ENCODE measurements at regions of chr21 and their contacts with region 1.

Region 1: GRCh38 chr21:33947451-33948095 is 32.0 kb upstream of the ATP5PO start:
- DNase-seq: peak; percentile 91
- H3K4me3 Mint-ChIP-seq: peak overlapping the region; percentile 62
- H3K27ac Mint-ChIP-seq: peak overlapping the region; percentile 99
- H3K4me1 Mint-ChIP-seq: peaks cover 78% of the 10 kb centered on the region
- H3K27me3 Mint-ChIP-seq: no peaks in the 10 kb centered on the region

Region 2: GRCh38 chr21:33931799-33932390 is 15.7 kb before region 1 on chr21:
- CTCF ChIA-PET with region 1: interaction called, 78 read pairs
- POLR2A ChIA-PET with region 1: interaction called, 28 read pairs
- DNase-seq: peak; percentile 38
- H3K4me3 Mint-ChIP-seq: peak overlapping the region; percentile 99
- H3K27ac Mint-ChIP-seq: peak overlapping the region; percentile 100
- H3K4me1 Mint-ChIP-seq: peaks cover 49% of the 10 kb centered on the region
- H3K27me3 Mint-ChIP-seq: no peaks in the 10 kb centered on the region

Region 3: DNA sequence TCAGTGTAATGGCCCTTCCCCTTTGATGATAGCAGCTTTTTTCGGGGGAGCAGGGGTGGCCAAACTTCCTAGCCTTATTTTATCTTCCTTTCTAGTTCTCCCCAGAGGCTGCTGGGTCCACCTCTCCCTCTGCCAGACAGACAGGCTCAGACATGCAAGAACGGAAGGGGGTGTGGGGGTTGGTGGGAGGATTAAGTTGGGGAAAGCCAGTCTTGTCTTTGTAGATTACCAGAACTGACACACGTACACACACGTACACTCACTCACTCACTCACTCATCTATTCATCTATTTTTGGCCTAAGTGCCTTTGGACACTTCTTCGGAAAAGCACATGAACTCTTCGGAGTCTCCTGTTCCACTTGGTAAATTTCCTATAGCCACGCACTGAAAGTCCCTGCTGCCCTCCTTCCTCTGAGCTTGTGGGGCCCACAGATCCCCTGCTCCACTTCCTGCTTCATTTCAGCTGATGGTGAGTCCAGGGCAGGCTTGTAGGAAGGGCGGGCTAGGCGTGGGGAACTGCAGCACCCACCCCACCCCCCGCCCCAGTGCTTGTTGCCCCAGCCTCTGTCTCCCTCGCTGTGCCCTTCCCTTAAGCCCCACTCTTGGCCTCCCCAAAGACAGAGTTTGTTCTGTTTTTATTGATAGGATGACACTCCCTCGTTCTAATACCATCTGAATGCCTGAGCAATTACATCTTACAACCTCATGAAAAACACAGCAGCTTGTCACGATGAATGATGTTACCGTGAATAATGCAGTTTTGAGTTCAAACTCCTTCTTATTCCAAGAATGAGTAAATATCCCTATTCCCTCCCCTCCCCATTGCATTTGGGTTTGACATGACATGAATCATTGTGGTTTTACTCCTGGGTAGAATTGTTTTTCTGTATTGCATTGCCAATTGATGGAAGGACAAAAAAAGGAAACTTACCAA is 28.8 kb after region 1 on chr21:
- CTCF ChIA-PET with region 1: interaction called, 13 read pairs
- POLR2A ChIA-PET with region 1: interaction called, 11 read pairs
- DNase-seq: peak; percentile 59
- H3K4me3 Mint-ChIP-seq: peak overlapping the region; percentile 55
- H3K27ac Mint-ChIP-seq: peak overlapping the region; percentile 94
- H3K4me1 Mint-ChIP-seq: peaks cover 72% of the 10 kb centered on the region
- H3K27me3 Mint-ChIP-seq: no peaks in the 10 kb centered on the region

Measured in activated CD4-positive, alpha-beta T cell treated with anti-CD3 and anti-CD28 coated beads, Interleukin-2, amount 10 ng/mL, durations not matched to agents 7 days and 5 days (primary cell).